HEK293T (cell line): ENCODE measurements at regions of chr19 and their contacts with region 1.

Region 1: DNA sequence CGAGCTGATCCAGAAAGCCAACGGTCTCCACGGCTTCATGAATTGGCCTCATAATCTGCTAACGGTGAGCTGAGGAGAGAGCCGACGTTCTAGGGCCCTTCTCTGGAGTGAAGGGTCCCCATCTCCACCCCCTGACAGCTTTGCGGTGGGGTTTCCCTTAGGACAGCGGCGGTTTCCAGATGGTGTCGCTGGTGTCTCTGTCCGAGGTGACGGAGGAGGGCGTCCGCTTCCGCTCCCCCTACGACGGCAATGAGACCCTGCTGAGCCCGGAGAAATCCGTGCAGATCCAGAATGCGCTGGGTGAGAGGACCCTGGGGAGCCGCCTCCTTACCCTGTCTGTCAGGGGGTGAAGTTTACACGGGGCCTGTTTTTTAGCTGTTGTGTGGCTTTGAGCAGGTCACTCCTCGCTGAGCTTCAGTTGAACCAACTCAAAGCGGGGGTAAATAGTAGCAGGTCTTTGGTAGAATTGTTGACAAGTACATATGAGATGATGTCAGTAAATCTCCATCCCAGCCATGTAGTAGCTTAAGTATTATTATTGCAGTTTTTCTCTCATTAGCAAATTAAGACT is 801 bp downstream of the QTRT1 start:
- DNase-seq: peak; percentile 47

Region 2: DNA sequence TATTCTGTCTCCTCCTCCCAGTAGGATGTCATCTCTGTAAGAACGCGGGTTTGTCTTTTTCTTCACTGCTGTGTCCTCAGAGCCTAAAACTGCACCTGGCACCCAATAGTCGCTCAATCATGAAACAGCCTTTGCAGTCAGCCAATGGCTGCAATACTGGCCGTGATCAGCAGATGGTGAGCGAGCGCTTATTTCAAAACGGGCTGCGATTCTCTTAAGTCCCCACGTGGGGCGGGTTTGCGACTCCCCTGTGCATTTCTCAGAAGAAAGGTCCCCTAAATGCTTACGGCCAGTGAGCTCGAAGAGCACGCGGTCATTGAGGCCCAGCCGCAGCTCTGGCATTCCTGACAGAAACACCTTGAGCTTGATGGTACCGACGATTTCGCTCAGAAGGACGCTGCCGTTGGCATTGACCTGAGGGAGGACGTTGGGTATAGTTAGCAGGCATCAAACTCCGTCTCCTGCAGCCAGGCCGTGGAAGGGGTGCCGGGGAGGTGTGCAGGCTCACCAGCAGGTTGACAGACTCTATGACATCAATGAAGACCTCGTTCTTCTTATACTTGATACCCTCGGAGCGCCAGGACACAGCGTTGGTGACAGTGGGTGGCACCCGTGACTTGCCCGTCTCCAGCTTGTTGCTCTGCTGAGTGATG is 120.9 kb before region 1 on chr19:
- CTCF ChIA-PET with region 1: interaction called, 59 read pairs
- POLR2A ChIA-PET with region 1: interaction called, 7 read pairs
- DNase-seq: peak; percentile 82

Region 3: DNA sequence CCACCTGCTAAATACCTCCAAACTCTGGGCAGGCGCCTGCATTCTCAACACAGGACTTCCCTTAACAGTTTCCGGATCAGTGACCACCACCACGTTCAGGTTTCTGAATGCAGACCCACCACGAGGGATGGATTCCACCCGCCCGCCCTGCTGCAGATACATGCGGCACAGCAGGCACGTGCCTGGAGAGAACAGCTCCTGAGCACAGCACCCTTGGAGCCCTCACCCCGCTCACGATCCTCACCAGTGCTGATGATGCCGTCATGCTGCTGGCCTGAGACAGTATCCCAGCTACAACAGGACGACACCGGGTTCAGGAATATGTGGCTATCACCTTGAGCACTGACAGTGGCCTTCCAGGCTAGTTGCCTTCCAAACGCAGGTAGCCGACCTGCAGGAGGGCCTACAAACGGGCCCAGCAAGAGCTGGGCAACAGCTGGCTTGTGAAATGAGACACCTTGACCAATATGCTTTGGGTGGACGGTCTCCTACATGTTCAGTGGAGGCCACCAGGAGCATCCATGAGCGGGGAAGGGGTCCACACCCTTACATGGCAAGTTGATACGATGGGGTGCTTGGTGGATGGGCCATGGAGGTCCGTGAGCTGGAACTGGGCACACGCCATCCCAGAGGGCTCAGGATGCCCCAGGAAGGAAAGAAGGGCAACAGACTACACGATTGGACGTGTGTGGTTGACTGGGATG is 10.7 kb before region 1 on chr19:
- CTCF ChIA-PET with region 1: no interaction called
- POLR2A ChIA-PET with region 1: no interaction called
- DNase-seq: no peak

Region 4: DNA sequence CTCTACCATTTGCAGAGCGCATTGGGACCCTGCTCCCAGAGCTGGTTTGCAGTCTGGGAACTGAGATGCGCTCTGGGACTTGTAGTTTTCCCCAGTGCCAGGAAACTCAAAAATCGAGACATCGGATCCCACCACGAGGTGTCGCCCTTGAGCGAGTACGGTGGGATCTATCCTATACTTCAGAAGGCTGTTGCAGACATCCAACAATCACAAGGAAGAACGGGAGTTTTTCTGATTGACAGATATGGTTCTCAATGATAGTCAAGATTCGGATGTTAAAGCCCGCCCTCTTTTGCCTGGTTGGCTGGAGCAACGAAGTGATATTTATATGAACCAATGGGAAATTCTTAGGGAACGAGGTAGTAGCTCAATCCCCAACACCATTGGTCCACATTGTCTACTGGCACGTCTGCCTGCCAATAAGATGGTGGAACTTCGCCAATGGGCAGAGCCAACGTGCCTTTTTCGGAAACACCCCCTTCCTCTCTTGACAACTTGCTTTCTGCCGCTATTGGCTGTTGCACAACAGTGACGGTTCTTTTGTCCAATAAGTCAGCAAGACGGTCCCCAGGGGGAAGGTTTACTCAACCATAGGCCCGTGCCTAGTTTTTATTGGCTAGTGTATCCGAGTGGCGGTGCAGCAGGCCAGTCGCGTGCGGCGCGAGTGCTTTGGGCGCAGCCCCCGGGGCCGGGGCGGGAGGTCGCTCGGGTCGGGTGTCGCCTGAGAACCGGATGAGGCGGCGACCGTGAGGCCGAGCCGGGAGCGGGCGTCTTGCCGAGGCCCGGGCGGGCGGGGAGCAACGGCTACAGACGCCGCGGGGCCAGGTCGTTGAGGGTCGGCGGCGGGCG is 15.5 kb after region 1 on chr19 and contains the start of gene DNM2:
- CTCF ChIA-PET with region 1: interaction called, 7 read pairs
- POLR2A ChIA-PET with region 1: interaction called, 13 read pairs
- DNase-seq: peak; percentile 91

Region 5: DNA sequence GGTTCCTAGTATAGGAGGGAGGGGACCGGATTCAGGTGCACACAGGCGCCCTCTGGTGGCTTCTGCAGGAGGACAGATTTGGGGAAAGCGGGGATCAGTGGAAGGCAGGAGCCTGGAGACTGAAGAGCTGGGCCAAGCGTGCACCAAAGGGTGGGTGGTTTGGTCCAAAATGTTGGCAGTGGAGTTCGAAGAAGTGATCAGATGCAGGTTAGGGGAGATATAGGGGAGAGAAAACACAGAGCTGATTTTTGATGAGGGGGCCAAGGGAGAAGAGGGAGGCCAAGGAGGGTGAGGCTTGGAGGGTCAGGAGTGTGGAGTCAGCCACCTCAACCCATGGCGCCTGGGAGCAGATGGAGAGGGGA is 162.5 kb after region 1 on chr19:
- CTCF ChIA-PET with region 1: interaction called, 15 read pairs
- POLR2A ChIA-PET with region 1: interaction called, 6 read pairs
- DNase-seq: peak; percentile 81